Dorsolateral prefrontal cortex (tissue), 120 donors: ENCODE measurements at regions of chr4 and their contacts with region 1.

Region 1: GRCh38 chr4:186725469-186726425 is 2.1 kb upstream of the FAT1 start:
- DNase-seq: peak in 9 of 10 donors; percentile 63 to 80 (median 70)
- H3K4me3 ChIP-seq: peak overlapping the region; percentile 53 to 86 (median 70)
- H3K27ac ChIP-seq: peak overlapping the region in 48 of 59 donors; percentile 8 to 87 (median 62)
- H3K27me3 ChIP-seq: peaks cover 0 to 51% (median 14%) of the 10 kb centered on the region in 45 donors
- CTCF ChIP-seq: peak; percentile 47 to 83 (median 68)

Region 2: DNA sequence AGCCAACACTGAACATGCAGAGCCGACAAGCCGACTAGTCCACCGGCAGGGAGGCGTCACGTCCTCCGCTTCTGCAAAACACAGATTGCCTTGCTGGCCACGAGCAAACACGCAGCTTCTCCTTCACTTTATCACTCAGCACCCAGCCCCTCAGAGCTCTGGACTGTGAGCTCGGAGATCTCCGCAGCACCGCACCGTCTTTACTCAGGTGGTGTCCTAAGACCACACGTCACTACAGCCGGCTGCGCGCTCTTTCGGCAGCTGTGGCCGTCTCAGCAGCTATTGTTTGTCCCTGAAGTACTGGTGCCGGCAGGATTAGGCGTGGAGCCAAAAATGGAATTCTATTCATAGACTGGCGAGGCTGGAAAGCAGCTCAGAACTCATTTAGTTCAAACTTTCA is 74.1 kb before region 1 on chr4:
- intact Hi-C with region 1: loop called (anchors 5 kb)
- DNase-seq: peak; percentile 21 to 78 (median 70)
- H3K4me3 ChIP-seq: peak overlapping the region; percentile 35 to 74 (median 60)
- H3K27ac ChIP-seq: peak overlapping the region in 48 of 59 donors; percentile 1 to 90 (median 68)
- H3K27me3 ChIP-seq: peaks cover 0 to 1% (median 0%) of the 10 kb centered on the region in 45 donors
- CTCF ChIP-seq: peak in 3 of 56 donors; percentile 13 to 18 (median 15)

Region 3: DNA sequence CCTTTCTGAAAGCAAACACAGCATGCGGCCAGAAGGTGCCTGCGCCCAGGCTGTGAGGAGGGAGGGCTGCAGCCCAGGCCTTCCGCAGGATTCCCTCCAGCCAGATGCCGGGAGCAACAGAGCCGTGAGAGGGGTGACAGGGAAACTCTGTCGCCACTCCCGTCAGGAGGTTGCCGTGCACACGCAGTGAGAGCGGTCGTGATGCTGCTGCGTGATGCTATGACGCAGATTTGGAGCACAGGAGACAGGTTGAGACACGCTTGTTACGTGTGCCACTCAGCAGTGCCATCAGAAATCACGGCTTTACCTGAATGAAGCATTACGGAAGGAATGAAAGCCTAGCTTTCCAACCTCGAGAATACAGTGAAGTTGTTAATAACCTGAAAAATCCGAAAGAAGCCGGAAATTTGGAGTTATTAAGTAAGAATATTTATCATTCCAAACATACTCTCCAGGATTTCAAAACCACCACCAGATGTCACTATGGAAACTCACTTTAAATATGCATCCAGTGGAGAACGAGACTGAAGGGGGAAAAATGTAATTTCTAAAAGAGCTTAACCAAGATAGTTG is 56.5 kb before region 1 on chr4:
- intact Hi-C with region 1: loop called in 1 of 2 experiments (anchors 2 kb)
- DNase-seq: no peak
- H3K4me3 ChIP-seq: peak overlapping the region in 7 of 59 donors; percentile 6 to 37 (median 22)
- H3K27ac ChIP-seq: peak overlapping the region in 1 of 59 donors; percentile 16
- H3K27me3 ChIP-seq: peaks cover 0 to 3% (median 0%) of the 10 kb centered on the region in 45 donors
- CTCF ChIP-seq: peak; percentile 33 to 82 (median 64)

Region 4: GRCh38 chr4:186920483-186920882 is 194.7 kb after region 1 on chr4:
- intact Hi-C with region 1: no loop called
- DNase-seq: no peak
- H3K4me3 ChIP-seq: no peak overlapping the region
- H3K27ac ChIP-seq: no peak overlapping the region
- H3K27me3 ChIP-seq: peaks cover 0 to 3% (median 0%) of the 10 kb centered on the region in 45 donors
- CTCF ChIP-seq: no peak